K562 (cell line): ENCODE measurements at regions of chr20 and their contacts with region 1.

Region 1: GRCh38 chr20:58087193-58087858 is 141.1 kb downstream of the ANKRD60 start:
- DNase-seq: peak; percentile 43 to 54 (median 44)
- ATAC-seq: peak; percentile 72
- H3K4me3 ChIP-seq: no peak overlapping the region
- H3K27ac ChIP-seq: no peak overlapping the region
- H3K4me1 ChIP-seq: no peaks in the 10 kb centered on the region
- H3K27me3 ChIP-seq: peaks cover under 1 to 25% of the 10 kb centered on the region in 2 experiments; a peak in 2 of 5 replicates
- CTCF ChIP-seq: peak; percentile 72 to 87 (median 78)
- EP300 ChIP-seq: no peak
- POLR2A ChIP-seq: no peak
- RAD21 ChIP-seq: peak; percentile 34 to 72

Region 2: GRCh38 chr20:58179432-58180099 is 92.2 kb after region 1 on chr20:
- CTCF ChIA-PET with region 1: no interaction called
- POLR2A ChIA-PET with region 1: no interaction called
- in situ Hi-C with region 1: no loop called
- intact Hi-C with region 1: loop called (anchors 5 kb)
- DNase-seq: peak; percentile 73 to 89 (median 84)
- ATAC-seq: peak; percentile 96
- H3K4me3 ChIP-seq: no peak overlapping the region; the same call in 1 of the 2 replicates
- H3K27ac ChIP-seq: no peak overlapping the region
- H3K4me1 ChIP-seq: peaks cover 0 to 9% of the 10 kb centered on the region in 2 experiments; a peak in 3 of 5 replicates
- H3K27me3 ChIP-seq: peaks cover 22 to 47% of the 10 kb centered on the region in 2 experiments; a peak in 4 of 5 replicates
- CTCF ChIP-seq: peak; percentile 85 to 89 (median 86)
- EP300 ChIP-seq: no peak
- POLR2A ChIP-seq: no peak
- RAD21 ChIP-seq: peak; percentile 68 to 86